Thyroid gland (tissue), 4 donors: ENCODE measurements at regions of chr17 and their contacts with region 1.

Region 1: GRCh38 chr17:44533533-44534246 is 23.6 kb upstream of the FZD2 start:
- DNase-seq: peak; percentile 77 to 81
- H3K4me3 ChIP-seq: no peak overlapping the region
- H3K27ac ChIP-seq: peak overlapping the region in 1 of 3 donors; percentile 46
- H3K4me1 ChIP-seq: peaks cover 0 to 9% of the 10 kb centered on the region in 2 donors
- H3K27me3 ChIP-seq: no peaks in the 10 kb centered on the region
- CTCF ChIP-seq: peak; percentile 51 to 82 (median 74)
- POLR2A ChIP-seq: no peak

Region 2: DNA sequence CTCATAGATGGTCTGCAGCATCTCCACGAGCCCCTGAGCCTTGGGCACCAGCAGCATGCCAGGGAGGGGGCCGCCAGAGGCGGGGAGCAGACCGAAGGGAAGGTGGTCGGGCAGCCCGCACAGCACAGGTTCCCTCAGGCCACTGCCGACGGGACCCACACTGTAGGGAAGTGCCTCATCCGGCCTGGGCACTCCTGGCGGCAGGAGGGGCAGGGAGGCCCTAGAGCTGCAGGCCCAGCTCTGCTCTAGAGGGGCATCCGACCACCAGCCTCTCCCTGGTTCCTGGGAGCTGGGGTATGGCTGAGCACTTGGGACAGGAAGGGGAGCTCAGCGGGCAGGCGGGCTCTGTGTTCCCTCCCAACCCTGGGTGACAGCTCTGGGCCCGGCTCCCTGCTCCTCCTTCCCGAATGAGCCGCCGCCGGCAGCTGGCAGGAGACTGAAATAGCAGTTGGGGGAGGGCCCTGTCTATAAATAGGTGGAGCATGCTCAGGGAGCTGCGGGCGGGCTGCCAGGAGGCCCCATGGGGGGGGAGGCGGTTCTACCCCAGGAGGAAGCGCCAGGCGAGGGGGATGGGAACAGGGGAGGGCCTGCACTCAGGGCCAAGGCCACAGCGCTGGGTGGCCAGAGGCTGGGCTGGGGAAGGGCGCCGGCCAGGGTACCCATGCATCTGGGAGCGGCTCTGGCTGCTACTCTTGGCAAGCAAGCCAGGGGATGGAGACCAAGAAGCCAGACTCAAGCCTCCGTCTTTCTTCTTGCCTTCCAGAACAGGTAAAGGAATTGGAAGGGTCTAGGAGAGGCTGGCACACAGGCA is 422.7 kb before region 1 on chr17:
- intact Hi-C with region 1: no loop called
- DNase-seq: peak; percentile 99
- H3K4me3 ChIP-seq: peak overlapping the region in 1 of 3 donors; percentile 17
- H3K27ac ChIP-seq: peak overlapping the region; percentile 73 to 84 (median 84)
- H3K4me1 ChIP-seq: peaks cover 34 to 67% of the 10 kb centered on the region in 2 donors
- H3K27me3 ChIP-seq: no peaks in the 10 kb centered on the region
- CTCF ChIP-seq: peak in 2 of 6 experiments; percentile 8 to 9
- POLR2A ChIP-seq: peak in 1 of 2 donors; percentile 89

Region 3: GRCh38 chr17:44565866-44566443 is 32.3 kb after region 1 on chr17:
- intact Hi-C with region 1: no loop called
- DNase-seq: no peak
- H3K4me3 ChIP-seq: no peak overlapping the region
- H3K27ac ChIP-seq: no peak overlapping the region
- H3K4me1 ChIP-seq: no peaks in the 10 kb centered on the region
- H3K27me3 ChIP-seq: no peaks in the 10 kb centered on the region
- CTCF ChIP-seq: no peak
- POLR2A ChIP-seq: no peak

Region 4: GRCh38 chr17:44636562-44636961 is 102.9 kb after region 1 on chr17:
- intact Hi-C with region 1: loop called (anchors 5 kb)
- DNase-seq: no peak
- H3K4me3 ChIP-seq: no peak overlapping the region
- H3K27ac ChIP-seq: no peak overlapping the region
- H3K4me1 ChIP-seq: no peaks in the 10 kb centered on the region
- H3K27me3 ChIP-seq: no peaks in the 10 kb centered on the region
- CTCF ChIP-seq: peak in 4 of 6 experiments; percentile 20 to 57 (median 49)
- POLR2A ChIP-seq: no peak